Ascending aorta (tissue), 2 donors: ENCODE measurements at regions of chr12 and their contacts with region 1.

Region 1: DNA sequence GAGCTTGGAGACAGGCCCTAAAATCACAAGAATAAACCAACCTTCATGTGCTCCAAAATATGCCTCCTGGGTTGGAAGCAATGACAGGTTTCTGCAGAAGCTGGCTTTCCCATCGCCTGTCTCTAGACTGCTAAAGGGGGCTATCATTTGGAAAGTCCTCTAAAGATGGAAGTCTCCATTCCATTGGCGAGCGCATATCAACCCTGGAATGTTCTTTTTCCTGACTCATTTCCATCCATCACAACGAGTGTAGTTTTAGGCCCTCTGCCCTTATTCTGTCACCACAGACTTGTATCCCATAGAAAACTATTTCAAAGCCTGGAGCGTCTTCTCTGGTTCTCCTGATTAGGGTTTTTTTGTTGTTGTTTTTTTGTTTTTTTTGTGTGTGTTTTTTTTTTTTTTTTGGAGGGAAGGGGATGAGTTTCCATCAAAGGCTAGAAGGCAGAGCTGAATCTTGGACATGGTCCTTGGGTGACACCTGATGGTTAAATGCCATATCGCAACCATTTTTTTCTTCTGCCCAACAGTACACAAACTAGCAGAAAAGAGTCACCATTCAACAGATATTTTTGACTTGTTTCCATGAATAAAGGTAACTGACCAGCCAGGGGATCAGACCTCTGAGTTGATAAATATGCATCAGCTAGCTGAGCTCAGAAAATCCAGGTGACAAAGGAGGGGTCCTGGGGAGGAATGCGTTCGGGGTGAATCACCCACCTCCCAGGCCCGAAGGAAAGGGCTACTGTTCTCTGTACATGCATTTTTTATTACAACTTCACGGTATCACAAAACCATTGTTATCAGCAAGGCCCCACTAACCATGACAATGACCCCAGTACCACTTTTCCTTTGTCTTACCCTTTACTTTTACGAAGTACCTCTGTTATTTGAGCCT is 40.5 kb downstream of the KCNA5 start:
- DNase-seq: no peak
- H3K4me3 ChIP-seq: no peak overlapping the region
- H3K27ac ChIP-seq: peak overlapping the region; percentile 63 to 69
- H3K4me1 ChIP-seq: peaks cover 12 to 48% of the 10 kb centered on the region in 2 donors
- H3K27me3 ChIP-seq: no peaks in the 10 kb centered on the region
- CTCF ChIP-seq: peak; percentile 54 to 74 (median 62)

Region 2: GRCh38 chr12:4857472-4858291 is 226.5 kb before region 1 on chr12:
- intact Hi-C with region 1: loop called (anchors 2 kb)
- DNase-seq: peak in 1 of 2 donors; percentile 83
- H3K4me3 ChIP-seq: peak overlapping the region; percentile 41 to 42
- H3K27ac ChIP-seq: no peak overlapping the region
- H3K4me1 ChIP-seq: peaks cover 3 to 10% of the 10 kb centered on the region in 2 donors
- H3K27me3 ChIP-seq: no peaks in the 10 kb centered on the region
- CTCF ChIP-seq: peak; percentile 56 to 88 (median 79)

Region 3: DNA sequence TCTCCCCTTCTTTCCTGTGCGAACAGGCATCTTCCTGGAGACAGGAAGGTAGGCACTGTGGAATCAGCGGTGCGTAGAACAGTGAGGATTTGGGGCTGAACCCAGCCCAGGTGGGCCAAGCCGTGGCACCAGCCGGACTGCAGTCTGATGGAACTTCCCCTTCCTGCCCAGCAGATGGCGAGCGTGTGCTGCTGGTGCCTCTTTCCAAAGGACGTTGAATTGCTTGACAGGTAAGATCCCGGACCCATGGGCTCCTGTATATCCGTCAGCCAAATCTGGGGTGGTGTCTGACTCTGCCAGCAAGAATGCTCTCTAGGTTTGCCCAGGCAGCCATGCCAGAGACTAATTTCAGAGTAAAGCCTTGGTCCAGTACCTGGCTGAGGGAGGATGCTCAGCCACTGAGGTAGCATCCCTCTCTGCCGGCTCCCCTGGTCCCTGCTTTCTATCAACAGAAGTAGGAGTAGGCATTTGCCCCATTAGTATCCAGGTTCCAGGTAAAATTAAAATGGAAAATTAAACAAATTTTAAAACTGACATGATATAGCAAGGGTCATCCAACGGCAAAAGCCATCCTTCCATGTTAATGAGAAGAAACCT is 61.6 kb before region 1 on chr12:
- intact Hi-C with region 1: loop called (anchors 1 kb)
- DNase-seq: no peak
- H3K4me3 ChIP-seq: no peak overlapping the region
- H3K27ac ChIP-seq: no peak overlapping the region
- H3K4me1 ChIP-seq: peaks cover 0 to 10% of the 10 kb centered on the region in 2 donors
- H3K27me3 ChIP-seq: no peaks in the 10 kb centered on the region
- CTCF ChIP-seq: peak; percentile 89 to 95 (median 92)

Region 4: GRCh38 chr12:5138845-5139244 is 54.6 kb after region 1 on chr12:
- intact Hi-C with region 1: no loop called
- DNase-seq: no peak
- H3K4me3 ChIP-seq: no peak overlapping the region
- H3K27ac ChIP-seq: peak overlapping the region; percentile 84 to 88
- H3K4me1 ChIP-seq: peaks cover 0 to 19% of the 10 kb centered on the region in 2 donors
- H3K27me3 ChIP-seq: no peaks in the 10 kb centered on the region
- CTCF ChIP-seq: no peak

Region 5: DNA sequence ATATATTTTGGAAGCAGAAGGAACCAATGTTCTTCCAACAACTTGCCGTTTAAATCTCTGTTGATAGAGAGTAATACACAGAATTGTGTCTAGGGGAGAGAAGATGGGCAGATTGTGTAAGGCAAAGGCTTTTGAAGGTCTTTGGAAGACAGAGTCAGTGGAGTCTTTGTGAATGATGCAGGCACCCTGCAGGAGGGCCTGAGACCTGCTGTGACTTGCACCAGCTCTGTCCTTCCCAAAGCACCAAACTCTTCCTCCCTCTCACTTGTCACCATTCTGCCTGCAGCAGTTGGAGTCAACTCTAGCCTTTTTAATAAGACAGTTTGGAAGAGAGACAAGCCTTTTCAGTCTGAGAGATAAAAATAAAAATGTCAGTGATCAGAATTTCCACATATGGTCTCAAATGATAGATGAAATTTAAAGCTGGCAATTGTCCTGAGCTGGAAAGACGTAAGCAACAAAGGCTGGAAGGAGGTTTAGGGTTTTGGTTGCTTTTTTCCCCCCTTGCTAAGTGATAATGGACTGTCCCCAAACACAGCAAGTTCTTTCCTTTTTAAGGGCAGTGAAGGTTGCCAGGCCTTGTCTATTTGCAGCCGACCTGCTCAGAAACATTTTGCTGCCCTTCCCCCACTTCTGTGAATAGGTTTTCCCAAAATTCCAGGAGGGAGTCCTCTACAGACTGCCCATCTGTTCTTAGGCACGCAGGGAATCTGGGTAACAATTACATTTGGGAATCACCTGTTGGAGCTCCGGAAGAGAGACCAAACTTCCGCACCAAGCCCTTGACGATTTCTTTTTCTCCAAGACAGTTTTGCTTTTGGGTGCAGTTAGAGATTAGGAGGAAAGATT is 244.7 kb after region 1 on chr12:
- intact Hi-C with region 1: no loop called
- DNase-seq: no peak
- H3K4me3 ChIP-seq: no peak overlapping the region
- H3K27ac ChIP-seq: peak overlapping the region; percentile 3 to 18
- H3K4me1 ChIP-seq: no peaks in the 10 kb centered on the region
- H3K27me3 ChIP-seq: no peaks in the 10 kb centered on the region
- CTCF ChIP-seq: no peak